Gastrocnemius medialis (tissue), 4 donors: ENCODE measurements at regions of chr11 and their contacts with region 1.

Region 1: DNA sequence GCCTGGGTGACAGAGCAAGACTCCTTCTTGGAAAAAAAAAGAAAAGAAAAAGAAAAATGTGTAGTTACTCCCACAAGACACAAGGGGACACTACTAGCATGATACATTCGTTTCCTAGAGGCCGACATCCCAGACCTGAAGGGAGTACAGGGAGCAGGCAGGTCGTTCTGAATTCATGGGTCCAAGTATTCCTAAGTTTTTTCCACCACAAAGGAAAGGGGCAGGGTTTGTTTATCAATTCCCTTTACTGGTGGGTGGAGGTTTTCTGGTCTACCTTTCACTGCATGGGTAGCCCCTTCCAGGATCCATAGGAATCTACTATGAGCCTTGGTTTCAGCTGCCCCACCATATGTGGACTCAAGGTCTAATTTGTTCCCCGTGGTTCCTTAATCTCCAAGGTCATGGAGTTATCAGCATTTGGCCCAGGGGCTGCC is 11.8 kb downstream of the TIGD3 start:
- DNase-seq: peak in 1 of 2 donors; percentile 57
- ATAC-seq: peak; percentile 67
- H3K4me3 ChIP-seq: no peak overlapping the region
- H3K27ac ChIP-seq: peak overlapping the region; percentile 61 to 78 (median 70)
- H3K4me1 ChIP-seq: peaks cover 21 to 22% of the 10 kb centered on the region in 2 donors
- H3K27me3 ChIP-seq: no peaks in the 10 kb centered on the region
- CTCF ChIP-seq: peak; percentile 86 to 91 (median 87)
- POLR2A ChIP-seq: no peak

Region 2: DNA sequence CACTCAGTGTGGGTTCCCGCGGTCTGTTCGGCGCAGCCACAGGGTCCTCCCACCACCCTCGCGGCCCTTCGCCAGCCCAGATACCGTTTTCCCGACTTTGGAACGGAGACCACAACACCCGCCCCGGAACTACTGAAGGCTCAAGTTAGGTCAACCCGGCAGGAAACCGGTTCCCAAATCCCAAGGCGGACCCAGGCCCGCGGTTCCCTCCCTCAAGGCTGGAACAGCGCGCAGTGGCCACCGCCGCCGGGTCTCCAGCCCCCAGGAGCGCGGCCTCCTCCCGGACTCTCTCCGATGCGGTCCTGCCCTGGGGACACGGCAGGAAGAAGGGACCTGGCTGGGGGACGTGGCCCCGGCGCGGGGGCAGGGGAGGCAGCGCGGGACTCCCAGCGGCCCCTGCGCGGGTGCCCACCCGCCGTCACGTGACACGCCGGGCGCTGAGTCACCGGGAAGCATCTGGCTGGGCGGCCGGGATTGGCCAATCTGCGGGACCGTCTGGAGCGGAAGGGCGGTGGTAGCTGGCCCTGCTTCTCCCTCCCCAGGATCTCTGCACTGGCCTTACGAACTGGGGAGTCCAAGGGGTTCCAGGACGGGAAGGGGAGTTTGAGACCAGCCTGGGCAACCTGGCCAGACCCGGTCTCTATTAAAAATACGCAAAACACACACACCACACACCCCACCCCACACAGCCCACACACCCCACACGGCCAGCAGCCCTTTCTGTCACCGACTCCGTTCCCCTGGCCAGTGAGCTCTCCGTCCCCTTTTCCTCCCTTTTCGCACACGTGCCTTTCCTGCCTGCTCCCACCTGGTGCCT is 111.0 kb after region 1 on chr11:
- in situ Hi-C with region 1: no loop called
- intact Hi-C with region 1: no loop called
- DNase-seq: peak; percentile 97 to 98
- ATAC-seq: peak; percentile 59 to 60
- H3K4me3 ChIP-seq: peak overlapping the region; percentile 79 to 88 (median 84)
- H3K27ac ChIP-seq: peak overlapping the region; percentile 97 to 100 (median 98)
- H3K4me1 ChIP-seq: peaks cover 61 to 67% of the 10 kb centered on the region in 2 donors
- H3K27me3 ChIP-seq: no peaks in the 10 kb centered on the region
- CTCF ChIP-seq: peak in 2 of 5 experiments; percentile 38 to 65
- POLR2A ChIP-seq: peak; percentile 97 to 99

Region 3: DNA sequence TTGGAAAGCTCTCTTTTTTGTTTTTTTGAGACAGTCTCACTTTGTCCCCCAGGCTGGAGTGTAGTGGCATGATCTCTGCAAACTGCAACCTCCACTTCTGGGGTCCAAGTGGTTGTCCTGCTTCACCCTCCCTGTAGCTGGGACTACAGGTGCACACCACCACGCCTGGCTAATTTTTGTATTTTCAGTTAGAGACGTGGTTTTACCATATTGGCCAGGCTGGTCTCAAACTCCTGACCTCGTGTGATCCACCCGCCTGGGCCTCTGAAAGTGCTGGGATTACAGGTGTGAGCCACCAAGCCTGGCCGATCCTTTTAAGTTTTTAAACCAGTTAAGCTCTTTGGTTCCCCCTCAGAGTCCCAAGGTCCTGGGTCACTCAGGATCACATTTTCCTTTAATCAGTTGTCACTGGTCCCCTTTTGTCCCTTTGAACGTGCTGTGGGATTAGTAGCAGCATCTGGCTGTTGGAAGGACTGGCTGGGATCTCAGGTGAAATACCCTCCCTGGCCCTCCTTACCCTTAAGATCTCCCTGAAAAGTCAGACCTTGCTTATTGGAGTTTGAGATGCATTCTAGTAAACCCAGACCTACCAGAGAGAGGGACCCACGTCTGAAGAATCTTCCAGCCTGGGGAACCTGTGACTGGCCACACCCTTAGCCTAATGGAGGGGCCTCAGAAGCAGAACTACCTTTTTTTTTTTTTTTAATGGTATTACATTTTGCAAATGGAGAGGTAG is 140.6 kb after region 1 on chr11:
- in situ Hi-C with region 1: loop called in 3 of 4 experiments (anchors 5 kb)
- intact Hi-C with region 1: loop called (anchors 1 kb)
- DNase-seq: peak in 1 of 2 donors; percentile 63
- ATAC-seq: peak; percentile 3 to 12
- H3K4me3 ChIP-seq: peak overlapping the region; percentile 18 to 93 (median 55)
- H3K27ac ChIP-seq: peak overlapping the region; percentile 91 to 99 (median 94)
- H3K4me1 ChIP-seq: peaks cover 38 to 46% of the 10 kb centered on the region in 2 donors
- H3K27me3 ChIP-seq: no peaks in the 10 kb centered on the region
- CTCF ChIP-seq: no peak
- POLR2A ChIP-seq: peak; percentile 24 to 56

Region 4: DNA sequence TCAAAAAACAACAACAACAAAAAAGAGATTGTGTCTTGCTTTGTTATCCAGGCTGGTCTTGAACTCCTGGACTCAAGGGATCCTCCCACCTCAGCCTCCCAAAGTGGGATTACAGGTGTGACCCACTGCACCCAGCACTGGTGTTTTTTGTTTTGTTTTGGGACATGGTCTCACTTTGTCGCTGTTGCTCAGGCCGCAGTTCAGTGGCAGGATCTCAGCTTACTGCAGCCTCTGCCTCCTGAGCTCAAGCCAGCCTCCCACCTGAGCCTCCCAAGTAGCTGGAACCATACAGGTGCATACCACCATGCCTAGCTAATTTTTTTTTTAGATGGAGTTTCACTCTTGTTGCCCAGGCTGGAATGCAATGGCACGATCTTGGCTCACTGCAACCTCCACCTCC is 145.9 kb after region 1 on chr11:
- in situ Hi-C with region 1: loop called in 3 of 4 experiments (anchors 5 kb)
- intact Hi-C with region 1: loop called (anchors 1 kb)
- DNase-seq: no peak
- ATAC-seq: no peak
- H3K4me3 ChIP-seq: no peak overlapping the region
- H3K27ac ChIP-seq: no peak overlapping the region
- H3K4me1 ChIP-seq: peaks cover 9 to 17% of the 10 kb centered on the region in 2 donors
- H3K27me3 ChIP-seq: no peaks in the 10 kb centered on the region
- CTCF ChIP-seq: no peak
- POLR2A ChIP-seq: no peak